ENCODE measurements at regions of chr14 and their contacts with region 1.

Region 1: GRCh38 chr14:91114079-91115065 is 499 bp downstream of the DGLUCY start:
- DNase-seq: peak; percentile 21 to 68
- ATAC-seq: peak; percentile 75 to 89 (median 84)
- H3K4me3 ChIP-seq: peak overlapping the region; percentile 59 to 82 (median 72)
- H3K27ac ChIP-seq: peak overlapping the region; percentile 90 to 98 (median 94)
- H3K4me1 ChIP-seq: peaks cover 10 to 54% (median 51%) of the 10 kb centered on the region in 9 donors
- H3K27me3 ChIP-seq: no peaks in the 10 kb centered on the region
- CTCF ChIP-seq: no peak

Region 2: DNA sequence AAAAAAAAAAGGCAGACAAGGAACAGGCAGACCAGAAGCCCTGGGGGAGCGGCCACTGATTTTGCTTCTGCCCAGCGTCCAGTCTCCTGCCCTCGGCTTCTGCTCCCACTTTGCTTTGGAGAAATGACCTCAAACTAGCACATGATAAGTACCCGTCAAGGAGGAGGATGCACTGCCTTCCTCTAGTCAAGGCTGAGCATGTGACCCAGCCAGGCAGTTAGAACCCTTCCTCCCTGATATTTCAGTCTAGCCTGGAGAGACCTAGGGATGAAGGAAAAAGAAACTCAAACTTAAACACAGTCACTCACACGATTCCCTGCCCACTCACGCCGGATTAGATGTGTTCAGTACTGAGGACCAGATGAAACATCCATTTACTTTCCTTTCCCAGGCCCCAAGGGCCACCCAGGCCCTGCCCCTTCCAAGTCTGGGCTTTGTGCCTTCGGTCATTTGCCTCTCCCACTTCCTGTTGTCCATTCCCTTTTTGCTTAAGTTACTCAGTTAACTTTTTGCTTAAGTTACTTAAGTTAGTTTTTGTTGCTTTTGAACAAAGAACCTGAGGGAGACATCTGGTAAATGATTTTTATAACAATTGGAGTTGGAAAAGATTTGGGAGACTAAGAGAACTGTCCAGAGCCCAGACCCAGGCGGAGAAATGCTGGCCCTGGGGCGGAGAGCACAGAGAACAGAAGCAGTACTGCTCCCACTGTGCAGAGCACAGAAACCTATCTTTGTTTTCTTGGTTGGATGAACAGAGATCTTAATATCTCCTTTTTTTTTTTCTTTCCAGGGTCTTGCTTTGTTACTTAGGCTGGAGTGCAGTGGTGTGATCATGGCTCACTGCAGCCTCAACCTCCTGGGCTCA is 275.1 kb before region 1 on chr14:
- intact Hi-C with region 1: no loop called
- DNase-seq: peak; percentile 62 to 81
- ATAC-seq: peak; percentile 79 to 96 (median 93)
- H3K4me3 ChIP-seq: peak overlapping the region in 8 of 10 donors; percentile 8 to 38 (median 27)
- H3K27ac ChIP-seq: peak overlapping the region; percentile 71 to 88 (median 82)
- H3K4me1 ChIP-seq: peaks cover 0 to 32% (median 17%) of the 10 kb centered on the region in 9 donors
- H3K27me3 ChIP-seq: no peaks in the 10 kb centered on the region
- CTCF ChIP-seq: no peak

Region 3: DNA sequence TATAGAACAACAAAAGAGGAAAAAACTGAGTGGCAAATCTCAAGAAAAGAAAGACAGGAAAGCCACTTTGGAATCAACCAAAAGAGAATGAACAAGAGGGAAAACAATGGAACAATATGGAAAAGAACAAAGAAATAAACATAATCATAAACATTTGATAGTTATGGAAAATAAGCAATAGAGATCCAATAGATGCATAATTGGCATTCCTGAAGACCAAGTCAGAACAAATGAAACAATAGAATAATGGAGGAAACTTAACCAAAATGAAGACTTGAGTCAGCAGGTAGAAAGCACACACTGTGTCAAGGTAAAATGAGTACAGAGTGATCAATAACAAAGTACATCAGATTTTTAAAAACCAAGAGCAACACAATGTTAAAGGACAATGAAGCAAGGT is 43.8 kb before region 1 on chr14:
- intact Hi-C with region 1: loop called in 1 of 10 experiments (anchors 1 kb)
- DNase-seq: no peak
- ATAC-seq: no peak
- H3K4me3 ChIP-seq: no peak overlapping the region
- H3K27ac ChIP-seq: no peak overlapping the region
- H3K4me1 ChIP-seq: peaks cover 0 to 15% (median 0%) of the 10 kb centered on the region in 9 donors
- H3K27me3 ChIP-seq: no peaks in the 10 kb centered on the region
- CTCF ChIP-seq: no peak

Region 4: GRCh38 chr14:91154851-91155625 is 40.7 kb after region 1 on chr14:
- intact Hi-C with region 1: loop called in 1 of 10 experiments (anchors 5 kb)
- DNase-seq: peak in 1 of 2 donors; percentile 57
- ATAC-seq: peak in 7 of 8 donors; percentile 49 to 77 (median 66)
- H3K4me3 ChIP-seq: no peak overlapping the region
- H3K27ac ChIP-seq: peak overlapping the region in 4 of 10 donors; percentile 14 to 41 (median 37)
- H3K4me1 ChIP-seq: peaks cover 0 to 47% (median 23%) of the 10 kb centered on the region in 9 donors
- H3K27me3 ChIP-seq: no peaks in the 10 kb centered on the region
- CTCF ChIP-seq: no peak